Activated B cell treated with CpG ODN at 0.5 μM for 24 hours (primary cell): ENCODE measurements at regions of chr2 and their contacts with region 1.

Region 1: GRCh38 chr2:105114551-105114950 is 76.7 kb downstream of the MRPS9 start:
- DNase-seq: no peak
- ATAC-seq: no peak
- H3K4me3 Mint-ChIP-seq: no peak overlapping the region
- H3K27ac Mint-ChIP-seq: no peak overlapping the region
- H3K4me1 Mint-ChIP-seq: no peaks in the 10 kb centered on the region
- H3K27me3 Mint-ChIP-seq: no peaks in the 10 kb centered on the region
- CTCF ChIP-seq: peak; percentile 64

Region 2: GRCh38 chr2:104923665-104924064 is 190.9 kb before region 1 on chr2:
- CTCF ChIA-PET with region 1: no interaction called
- POLR2A ChIA-PET with region 1: no interaction called
- intact Hi-C with region 1: no loop called
- DNase-seq: no peak
- ATAC-seq: no peak
- H3K4me3 Mint-ChIP-seq: no peak overlapping the region
- H3K27ac Mint-ChIP-seq: no peak overlapping the region
- H3K4me1 Mint-ChIP-seq: peaks cover 4% of the 10 kb centered on the region
- H3K27me3 Mint-ChIP-seq: no peaks in the 10 kb centered on the region
- CTCF ChIP-seq: no peak

Region 3: DNA sequence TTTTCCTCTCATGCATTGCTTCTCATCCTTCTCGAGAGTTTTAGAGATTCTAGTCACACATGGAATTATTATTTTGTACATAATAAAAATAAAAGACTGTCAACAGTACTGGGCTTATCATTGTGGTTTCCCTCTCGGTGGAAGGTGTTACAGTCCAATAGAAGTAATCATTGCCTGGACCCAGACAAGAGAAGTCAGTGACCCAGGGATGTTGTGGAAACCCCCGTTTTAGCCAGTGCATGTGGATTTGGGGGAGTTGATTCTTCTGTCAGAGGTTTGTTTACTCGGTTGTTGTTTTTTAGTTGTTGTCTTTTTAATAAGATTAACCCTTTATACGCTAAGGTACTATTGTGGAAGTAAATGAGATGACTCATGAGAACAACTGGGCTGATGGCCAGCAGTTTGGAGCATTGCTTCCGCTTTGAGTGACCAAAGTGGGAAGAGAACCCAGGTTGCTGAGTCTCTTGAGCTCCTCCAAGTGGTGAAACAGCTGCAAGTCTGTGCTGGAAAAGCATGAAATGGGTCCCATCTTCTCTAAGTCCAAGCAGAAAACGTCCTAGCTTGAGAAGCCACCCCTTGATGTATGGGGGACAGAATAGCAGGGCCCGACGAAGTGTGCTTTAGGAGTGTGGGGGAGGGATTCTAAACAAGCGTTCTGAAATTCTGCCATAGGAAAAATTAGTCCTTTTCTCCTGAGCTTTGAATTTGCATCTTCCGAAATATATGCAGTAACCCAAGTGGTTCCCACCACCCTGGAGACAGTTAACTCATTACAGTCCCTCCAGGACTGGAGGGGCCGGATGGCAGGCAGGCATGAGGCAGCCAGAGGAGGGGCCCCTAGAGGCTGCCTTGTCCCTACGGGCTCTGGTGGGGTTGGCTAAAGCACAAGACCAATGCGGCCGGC is 65.2 kb after region 1 on chr2:
- CTCF ChIA-PET with region 1: interaction called, 19 read pairs
- POLR2A ChIA-PET with region 1: no interaction called
- intact Hi-C with region 1: no loop called
- DNase-seq: no peak
- ATAC-seq: no peak
- H3K4me3 Mint-ChIP-seq: no peak overlapping the region
- H3K27ac Mint-ChIP-seq: no peak overlapping the region
- H3K4me1 Mint-ChIP-seq: peaks cover 69% of the 10 kb centered on the region
- H3K27me3 Mint-ChIP-seq: no peaks in the 10 kb centered on the region
- CTCF ChIP-seq: no peak

Region 4: GRCh38 chr2:105294844-105295481 is 180.4 kb after region 1 on chr2:
- CTCF ChIA-PET with region 1: interaction called, 6 read pairs
- POLR2A ChIA-PET with region 1: no interaction called
- intact Hi-C with region 1: loop called (anchors 1 kb)
- DNase-seq: no peak
- ATAC-seq: no peak
- H3K4me3 Mint-ChIP-seq: no peak overlapping the region
- H3K27ac Mint-ChIP-seq: no peak overlapping the region
- H3K4me1 Mint-ChIP-seq: no peaks in the 10 kb centered on the region
- H3K27me3 Mint-ChIP-seq: no peaks in the 10 kb centered on the region
- CTCF ChIP-seq: no peak